ENCODE measurements at regions of chr16 and their contacts with region 1.

Region 1: GRCh38 chr16:68264128-68265077 is at the start of gene SLC7A6:
- DNase-seq: no peak
- H3K4me3 ChIP-seq: peak within 1 kb of the TSS; percentile 98
- H3K27me3 ChIP-seq: no peaks in the 10 kb centered on the region
- CTCF ChIP-seq: peak; percentile 84
- polyA plus RNA-seq, gene SLC7A6: 45.7 and 51.2 TPM in 2 replicates

Region 2: GRCh38 chr16:68237243-68238028 is 27.0 kb before region 1 on chr16:
- CTCF ChIA-PET with region 1: interaction called, 17 read pairs
- POLR2A ChIA-PET with region 1: no interaction called
- DNase-seq: peak; percentile 89
- H3K4me3 ChIP-seq: peak overlapping the region; percentile 56
- H3K27me3 ChIP-seq: no peaks in the 10 kb centered on the region
- CTCF ChIP-seq: no peak

Region 3: DNA sequence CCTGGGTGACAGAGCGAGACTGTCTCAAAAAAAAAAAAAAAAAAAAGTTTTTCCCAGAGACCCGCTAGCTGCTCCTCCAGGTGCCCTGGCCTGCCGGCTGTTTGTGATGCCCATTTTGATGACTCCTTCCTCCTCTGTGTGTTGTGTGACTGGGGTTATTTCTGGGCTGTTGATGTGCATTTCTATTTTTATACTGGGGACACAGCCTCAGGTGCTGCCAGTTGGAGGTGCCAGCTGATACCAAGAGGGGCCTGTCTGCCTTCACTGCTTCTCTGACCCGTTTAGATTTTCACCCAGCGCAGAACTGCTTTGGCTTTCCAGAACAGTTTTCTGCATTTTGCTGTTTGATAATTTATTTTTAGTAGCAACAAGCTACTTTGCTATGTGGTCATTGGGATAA is 12.6 kb before region 1 on chr16:
- CTCF ChIA-PET with region 1: interaction called, 27 read pairs
- POLR2A ChIA-PET with region 1: no interaction called
- DNase-seq: no peak
- H3K4me3 ChIP-seq: no peak overlapping the region
- H3K27me3 ChIP-seq: no peaks in the 10 kb centered on the region
- CTCF ChIP-seq: no peak

Region 4: DNA sequence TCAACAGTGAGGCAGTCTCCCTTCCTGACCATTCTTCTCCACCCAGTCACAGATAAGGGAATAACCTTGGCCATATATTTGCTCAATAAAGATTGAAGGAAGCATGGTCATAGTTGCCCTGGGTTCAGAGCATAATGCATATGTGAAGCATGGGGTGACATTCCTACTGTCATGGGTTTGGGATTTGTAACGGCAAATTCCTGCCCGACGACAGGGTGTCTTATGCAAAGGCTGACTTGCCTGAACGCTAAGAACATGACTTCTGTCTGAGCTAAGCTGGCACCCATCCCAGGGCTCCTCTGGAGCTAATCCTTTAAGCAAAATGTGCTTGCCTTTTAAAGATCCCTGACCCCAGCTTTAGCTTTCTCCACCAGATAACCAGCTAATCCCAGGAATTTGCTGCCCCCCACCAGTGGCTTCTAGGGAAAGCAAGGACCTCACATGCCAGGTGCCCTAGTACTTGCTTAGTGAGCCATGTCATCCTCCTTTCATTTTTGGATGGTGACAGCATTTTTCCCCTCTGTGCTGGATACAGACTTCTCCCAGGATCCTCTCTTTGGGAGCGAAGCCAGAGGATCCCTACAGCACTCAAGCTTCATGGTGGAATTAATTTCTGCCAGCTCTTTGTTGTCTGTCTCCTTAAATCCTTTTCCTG is 34.6 kb after region 1 on chr16:
- CTCF ChIA-PET with region 1: interaction called, 46 read pairs
- POLR2A ChIA-PET with region 1: no interaction called
- DNase-seq: no peak
- H3K4me3 ChIP-seq: no peak overlapping the region
- H3K27me3 ChIP-seq: no peaks in the 10 kb centered on the region
- CTCF ChIP-seq: no peak

Region 5: DNA sequence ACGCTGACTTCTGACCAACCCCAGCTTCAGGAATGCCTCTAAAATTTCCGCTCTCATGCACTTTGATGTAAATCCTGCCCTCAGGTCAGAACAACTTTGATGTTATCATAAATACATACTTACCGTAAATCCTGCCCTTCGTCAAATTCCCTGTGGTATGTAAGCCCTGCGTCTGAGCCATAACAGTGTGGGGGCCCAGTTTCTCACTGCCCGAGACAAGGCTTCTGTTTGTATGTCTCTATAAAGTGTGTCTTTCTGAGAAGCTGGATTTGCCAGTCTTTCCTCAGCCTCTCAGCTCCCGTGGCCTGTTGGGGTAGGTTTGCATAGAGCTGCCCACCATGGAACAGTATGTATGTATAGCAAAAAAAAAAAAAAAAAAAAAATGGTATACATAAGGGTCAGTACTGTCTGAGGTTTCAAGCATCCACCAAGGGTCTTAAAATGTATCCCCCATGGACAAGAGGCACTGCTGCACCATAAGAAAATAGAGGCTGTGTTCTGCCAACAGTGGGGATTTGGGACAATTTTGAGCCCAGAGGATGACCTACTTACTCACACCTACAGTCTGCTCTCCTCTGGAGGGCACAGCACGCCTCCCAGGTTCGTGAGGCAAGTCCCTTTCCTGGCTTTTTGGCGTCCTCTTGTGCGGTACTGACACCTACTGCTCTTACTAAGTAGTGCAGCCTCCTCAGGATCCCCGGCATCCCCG is 63.9 kb after region 1 on chr16:
- CTCF ChIA-PET with region 1: interaction called, 310 read pairs
- POLR2A ChIA-PET with region 1: no interaction called
- DNase-seq: peak; percentile 19
- H3K4me3 ChIP-seq: no peak overlapping the region
- H3K27me3 ChIP-seq: no peaks in the 10 kb centered on the region
- CTCF ChIP-seq: peak; percentile 94